ENCODE measurements at regions of chr22 and their contacts with region 1.

Region 1: DNA sequence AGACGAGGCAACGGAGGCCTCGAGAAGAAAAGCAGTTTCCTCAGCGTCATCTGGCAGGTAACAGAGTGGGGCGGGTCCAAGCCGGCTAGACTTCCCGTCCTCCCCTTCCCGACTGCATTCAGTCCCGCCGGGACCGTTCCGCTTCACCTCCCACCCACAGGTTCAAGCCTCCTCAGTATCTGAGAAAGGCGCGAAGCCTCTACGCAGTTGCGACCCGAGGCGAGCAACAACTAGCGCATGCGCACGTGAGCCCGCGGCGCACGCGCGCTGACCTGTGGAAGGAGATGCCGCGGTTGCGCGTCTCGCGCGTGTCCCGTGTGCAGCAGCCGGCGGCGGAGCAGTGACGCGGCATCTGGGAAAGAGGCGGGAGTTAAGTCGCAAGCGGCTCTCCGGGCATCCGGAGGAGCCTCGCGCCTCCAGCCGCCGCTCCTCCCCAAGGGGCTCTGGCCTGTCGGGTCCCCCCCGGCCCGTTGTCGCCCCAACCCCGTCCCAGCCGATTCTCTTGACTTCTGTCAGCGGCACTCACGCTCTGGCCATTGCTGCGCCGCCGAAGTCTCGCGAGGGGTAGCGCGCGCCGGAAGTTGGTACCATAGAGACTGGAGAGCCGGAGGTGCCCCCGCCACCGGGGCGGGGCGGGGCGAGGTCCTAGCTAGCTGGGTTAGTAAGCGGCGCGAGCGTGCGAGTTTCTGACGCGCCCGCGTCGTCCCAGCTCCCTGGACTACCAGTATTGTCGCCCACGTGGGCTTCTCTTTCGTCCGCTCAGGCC is at the start of gene THAP7:
- DNase-seq: peak; percentile 99
- ATAC-seq: peak; percentile 88
- H3K4me3 ChIP-seq: peak within 1 kb of the TSS; percentile 66 to 99 (median 88)
- H3K4me3 Mint-ChIP-seq: peak within 1 kb of the TSS; percentile 95
- H3K27ac ChIP-seq: peak within 1 kb of the TSS; percentile 91 to 96
- H3K27ac Mint-ChIP-seq: peak within 1 kb of the TSS; percentile 99
- H3K4me1 ChIP-seq: peaks cover 24 to 36% of the 10 kb centered on the region in 2 donors
- H3K4me1 Mint-ChIP-seq: peaks cover 32% of the 10 kb centered on the region
- H3K27me3 ChIP-seq: no peaks in the 10 kb centered on the region
- H3K27me3 Mint-ChIP-seq: no peaks in the 10 kb centered on the region
- CTCF ChIP-seq: no peak
- total RNA-seq, gene THAP7: 37.7 and 43.1 TPM in 2 replicates

Region 2: GRCh38 chr22:20858615-20859416 is 142.9 kb before region 1 on chr22 and contains the starts of genes PI4KA and SNAP29:
- CTCF ChIA-PET with region 1: no interaction called
- POLR2A ChIA-PET with region 1: no interaction called
- intact Hi-C with region 1: loop called (anchors 1 kb)
- DNase-seq: peak; percentile 99
- ATAC-seq: peak; percentile 92
- H3K4me3 ChIP-seq: peak within 1 kb of the TSS; percentile 80 to 94 (median 87)
- H3K4me3 Mint-ChIP-seq: peak within 1 kb of the TSS; percentile 92
- H3K27ac ChIP-seq: peak within 1 kb of the TSS; percentile 76 to 85
- H3K27ac Mint-ChIP-seq: peak within 1 kb of the TSS; percentile 94
- H3K4me1 ChIP-seq: peaks cover 18 to 30% of the 10 kb centered on the region in 2 donors
- H3K4me1 Mint-ChIP-seq: peaks cover 51% of the 10 kb centered on the region
- H3K27me3 ChIP-seq: no peaks in the 10 kb centered on the region
- H3K27me3 Mint-ChIP-seq: no peaks in the 10 kb centered on the region
- CTCF ChIP-seq: no peak
- total RNA-seq, gene PI4KA: 149 and 156 TPM in 2 replicates
- total RNA-seq, gene SNAP29: 17.4 and 18.8 TPM in 2 replicates

Region 3: GRCh38 chr22:20885557-20886323 is 116.0 kb before region 1 on chr22:
- CTCF ChIA-PET with region 1: no interaction called
- POLR2A ChIA-PET with region 1: no interaction called
- intact Hi-C with region 1: no loop called
- DNase-seq: peak; percentile 60
- ATAC-seq: peak; percentile 56
- H3K4me3 ChIP-seq: no peak overlapping the region
- H3K4me3 Mint-ChIP-seq: no peak overlapping the region
- H3K27ac ChIP-seq: no peak overlapping the region
- H3K27ac Mint-ChIP-seq: no peak overlapping the region
- H3K4me1 ChIP-seq: no peaks in the 10 kb centered on the region
- H3K4me1 Mint-ChIP-seq: no peaks in the 10 kb centered on the region
- H3K27me3 ChIP-seq: no peaks in the 10 kb centered on the region
- H3K27me3 Mint-ChIP-seq: no peaks in the 10 kb centered on the region
- CTCF ChIP-seq: peak; percentile 73

Region 4: DNA sequence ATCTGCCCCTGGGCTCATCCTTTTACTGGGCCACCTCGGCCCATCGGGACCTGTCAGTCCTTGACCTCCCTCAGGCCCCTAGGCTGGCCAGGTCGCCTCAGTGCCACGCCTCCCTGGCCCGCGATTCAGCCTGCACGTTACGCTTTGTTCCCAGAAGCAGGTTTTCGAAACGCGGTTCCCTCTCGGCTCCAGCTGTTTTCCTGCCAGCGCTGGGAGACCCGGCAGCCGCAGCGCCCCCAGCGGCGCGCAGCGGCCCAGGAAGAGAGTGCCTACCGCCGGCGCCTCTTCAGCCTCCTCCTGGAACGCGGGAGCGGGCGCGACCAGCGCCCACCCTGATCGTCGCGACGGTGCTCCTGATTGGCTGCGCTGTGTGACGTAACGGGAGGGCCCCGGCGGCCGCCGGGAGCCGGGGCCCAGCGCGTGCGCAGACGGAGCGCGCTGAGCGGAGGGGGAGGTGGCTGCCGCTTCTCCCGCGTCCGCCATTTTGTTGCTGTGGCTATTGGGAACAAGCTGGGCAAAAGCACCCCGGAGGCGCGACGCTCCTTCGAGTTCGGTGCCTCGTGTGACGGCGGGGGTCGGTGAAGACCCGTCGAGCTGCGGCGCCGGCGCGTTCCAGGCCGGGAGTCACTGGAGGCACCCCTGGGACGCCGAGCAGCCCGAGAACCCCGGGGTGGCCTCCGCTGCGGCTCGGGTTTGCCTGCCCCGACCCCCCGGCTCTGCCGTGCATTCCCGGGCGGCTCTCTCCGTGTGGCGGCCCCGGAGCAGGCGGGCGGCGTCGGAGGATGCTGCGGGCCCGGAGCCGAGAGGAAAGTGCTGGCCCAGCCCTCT is 84.5 kb before region 1 on chr22 and contains the start of gene CRKL:
- CTCF ChIA-PET with region 1: no interaction called
- POLR2A ChIA-PET with region 1: interaction called, 9 read pairs
- intact Hi-C with region 1: loop called (anchors 1 kb)
- DNase-seq: peak; percentile 98
- ATAC-seq: peak; percentile 97
- H3K4me3 ChIP-seq: peak within 1 kb of the TSS; percentile 84 to 96 (median 94)
- H3K4me3 Mint-ChIP-seq: peak within 1 kb of the TSS; percentile 95
- H3K27ac ChIP-seq: peak within 1 kb of the TSS; percentile 59 to 92
- H3K27ac Mint-ChIP-seq: peak within 1 kb of the TSS; percentile 88
- H3K4me1 ChIP-seq: peaks cover 23 to 33% of the 10 kb centered on the region in 2 donors
- H3K4me1 Mint-ChIP-seq: peaks cover 39% of the 10 kb centered on the region
- H3K27me3 ChIP-seq: no peaks in the 10 kb centered on the region
- H3K27me3 Mint-ChIP-seq: no peaks in the 10 kb centered on the region
- CTCF ChIP-seq: peak; percentile 88
- total RNA-seq, gene CRKL: 75.3 and 76.7 TPM in 2 replicates

Region 5: DNA sequence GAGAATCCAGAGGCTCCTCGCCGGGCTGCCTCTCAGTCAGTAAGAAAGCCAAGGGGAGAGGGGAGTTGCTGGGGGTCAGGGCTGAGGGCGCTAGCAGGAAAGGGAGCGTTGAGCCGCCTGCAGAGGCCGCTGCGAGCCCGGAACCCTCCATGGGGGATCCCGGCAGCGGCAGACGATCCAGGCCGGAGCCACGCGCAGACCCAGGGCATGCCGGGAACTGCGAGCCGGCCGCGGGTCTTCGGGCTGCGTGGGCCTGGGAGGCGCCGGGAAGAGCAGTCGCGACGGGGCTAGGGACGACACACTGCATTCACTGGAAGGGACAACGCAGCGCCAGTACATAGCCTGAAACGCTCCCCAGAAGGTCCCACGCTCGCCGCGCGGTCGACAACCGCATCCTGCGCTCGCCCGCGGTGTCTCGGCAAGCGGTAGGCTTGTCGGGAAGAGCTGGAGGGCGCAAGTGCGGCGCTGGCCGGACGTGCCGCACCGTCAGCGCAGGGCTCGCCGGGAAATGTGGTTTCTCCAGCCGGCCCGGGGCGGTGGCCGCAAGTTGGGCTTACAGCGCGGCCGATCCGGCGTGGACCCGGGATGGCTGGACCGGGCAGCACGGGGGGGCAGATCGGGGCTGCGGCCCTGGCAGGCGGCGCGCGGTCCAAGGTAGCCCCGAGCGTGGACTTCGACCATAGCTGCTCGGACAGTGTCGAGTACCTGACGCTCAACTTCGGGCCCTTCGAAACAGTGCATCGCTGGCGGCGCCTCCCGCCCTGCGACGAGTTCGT is 19.8 kb before region 1 on chr22 and contains the start of gene LZTR1:
- CTCF ChIA-PET with region 1: interaction called, 14 read pairs
- POLR2A ChIA-PET with region 1: no interaction called
- intact Hi-C with region 1: loop called (anchors 1 kb)
- DNase-seq: peak; percentile 87
- ATAC-seq: peak; percentile 85
- H3K4me3 ChIP-seq: peak within 1 kb of the TSS; percentile 53 to 85 (median 77)
- H3K4me3 Mint-ChIP-seq: peak within 1 kb of the TSS; percentile 95
- H3K27ac ChIP-seq: peak within 1 kb of the TSS; percentile 75 to 79
- H3K27ac Mint-ChIP-seq: peak within 1 kb of the TSS; percentile 89
- H3K4me1 ChIP-seq: peaks cover 24 to 34% of the 10 kb centered on the region in 2 donors
- H3K4me1 Mint-ChIP-seq: peaks cover 36% of the 10 kb centered on the region
- H3K27me3 ChIP-seq: peaks cover 0 to 3% (median 0%) of the 10 kb centered on the region in 4 experiments
- H3K27me3 Mint-ChIP-seq: peaks cover 3% of the 10 kb centered on the region
- CTCF ChIP-seq: peak; percentile 51
- total RNA-seq, gene LZTR1: 94.8 and 104 TPM in 2 replicates

Region 6: GRCh38 chr22:21014202-21014725 is 12.5 kb after region 1 on chr22:
- CTCF ChIA-PET with region 1: no interaction called
- POLR2A ChIA-PET with region 1: interaction called, 6 read pairs
- intact Hi-C with region 1: loop called (anchors 1 kb)
- DNase-seq: peak; percentile 95
- ATAC-seq: peak; percentile 95
- H3K4me3 ChIP-seq: peak overlapping the region in 4 of 5 experiments; percentile 45 to 57 (median 52)
- H3K4me3 Mint-ChIP-seq: peak overlapping the region; percentile 94
- H3K27ac ChIP-seq: peak overlapping the region; percentile 73 to 74
- H3K27ac Mint-ChIP-seq: peak overlapping the region; percentile 91
- H3K4me1 ChIP-seq: peaks cover 14 to 24% of the 10 kb centered on the region in 2 donors
- H3K4me1 Mint-ChIP-seq: peaks cover 24% of the 10 kb centered on the region
- H3K27me3 ChIP-seq: no peaks in the 10 kb centered on the region
- H3K27me3 Mint-ChIP-seq: no peaks in the 10 kb centered on the region
- CTCF ChIP-seq: no peak

Region 7: GRCh38 chr22:21045585-21046294 is 44.0 kb after region 1 on chr22 and contains the start of gene LRRC74B:
- CTCF ChIA-PET with region 1: no interaction called
- POLR2A ChIA-PET with region 1: interaction called, 3 read pairs
- intact Hi-C with region 1: loop called (anchors 1 kb)
- DNase-seq: peak; percentile 83
- ATAC-seq: peak; percentile 93
- H3K4me3 ChIP-seq: peak within 1 kb of the TSS in 3 of 5 experiments; percentile 19 to 44 (median 34)
- H3K4me3 Mint-ChIP-seq: peak within 1 kb of the TSS; percentile 64
- H3K27ac ChIP-seq: no peak within 1 kb of the TSS
- H3K27ac Mint-ChIP-seq: peak within 1 kb of the TSS; percentile 70
- H3K4me1 ChIP-seq: peaks cover 23 to 24% of the 10 kb centered on the region in 2 donors
- H3K4me1 Mint-ChIP-seq: peaks cover 20% of the 10 kb centered on the region
- H3K27me3 ChIP-seq: peaks cover 0 to 30% (median 7%) of the 10 kb centered on the region in 4 experiments
- H3K27me3 Mint-ChIP-seq: peaks cover 23% of the 10 kb centered on the region
- CTCF ChIP-seq: no peak
- total RNA-seq, gene LRRC74B: 0.12 and 0.17 TPM in 2 replicates

Region 8: DNA sequence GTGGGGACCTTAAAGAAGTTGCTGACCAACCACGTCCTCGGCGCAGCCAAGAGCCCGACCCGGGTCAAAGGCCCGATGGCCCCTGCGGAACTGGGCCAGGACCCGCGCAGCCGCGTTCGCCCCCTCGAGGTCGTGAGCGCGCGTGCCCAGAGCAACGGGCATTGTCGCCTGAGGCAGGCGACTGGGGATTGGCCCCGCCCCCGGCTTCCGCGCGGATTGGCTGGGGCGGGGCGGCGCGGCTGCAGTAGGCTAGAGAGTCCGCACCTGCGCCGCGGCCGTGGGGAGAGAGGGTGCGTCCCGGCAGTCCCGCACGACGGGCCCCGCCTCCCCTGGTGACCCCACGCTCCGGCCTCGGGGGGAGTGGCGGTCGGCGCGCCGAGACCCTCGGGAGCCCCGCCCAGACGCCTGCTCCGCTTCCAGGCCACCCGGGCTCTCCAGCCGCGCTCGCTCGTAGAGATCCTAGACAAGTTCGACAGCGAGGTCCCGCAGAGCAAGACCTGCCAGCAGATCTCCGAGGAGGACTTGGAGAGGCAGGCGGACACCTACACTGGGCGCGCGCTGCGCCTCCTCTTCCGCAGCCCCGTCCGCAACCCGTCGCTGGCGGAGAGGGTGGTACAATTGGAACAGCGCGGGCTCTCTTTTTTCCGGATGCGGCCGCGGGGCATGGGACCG is 655.8 kb after region 1 on chr22:
- CTCF ChIA-PET with region 1: no interaction called
- POLR2A ChIA-PET with region 1: no interaction called
- intact Hi-C with region 1: loop called (anchors 5 kb)
- DNase-seq: peak; percentile 88
- ATAC-seq: peak; percentile 97
- H3K4me3 ChIP-seq: peak overlapping the region in 4 of 5 experiments; percentile 60 to 73 (median 64)
- H3K4me3 Mint-ChIP-seq: peak overlapping the region; percentile 90
- H3K27ac ChIP-seq: no peak overlapping the region
- H3K27ac Mint-ChIP-seq: peak overlapping the region; percentile 75
- H3K4me1 ChIP-seq: peaks cover 6 to 18% of the 10 kb centered on the region in 2 donors
- H3K4me1 Mint-ChIP-seq: peaks cover 10% of the 10 kb centered on the region
- H3K27me3 ChIP-seq: no peaks in the 10 kb centered on the region
- H3K27me3 Mint-ChIP-seq: no peaks in the 10 kb centered on the region
- CTCF ChIP-seq: peak; percentile 31

Measured in B cell (primary cell).